H1 (cell line): ENCODE measurements at regions of chr10 and their contacts with region 1.

Region 1: DNA sequence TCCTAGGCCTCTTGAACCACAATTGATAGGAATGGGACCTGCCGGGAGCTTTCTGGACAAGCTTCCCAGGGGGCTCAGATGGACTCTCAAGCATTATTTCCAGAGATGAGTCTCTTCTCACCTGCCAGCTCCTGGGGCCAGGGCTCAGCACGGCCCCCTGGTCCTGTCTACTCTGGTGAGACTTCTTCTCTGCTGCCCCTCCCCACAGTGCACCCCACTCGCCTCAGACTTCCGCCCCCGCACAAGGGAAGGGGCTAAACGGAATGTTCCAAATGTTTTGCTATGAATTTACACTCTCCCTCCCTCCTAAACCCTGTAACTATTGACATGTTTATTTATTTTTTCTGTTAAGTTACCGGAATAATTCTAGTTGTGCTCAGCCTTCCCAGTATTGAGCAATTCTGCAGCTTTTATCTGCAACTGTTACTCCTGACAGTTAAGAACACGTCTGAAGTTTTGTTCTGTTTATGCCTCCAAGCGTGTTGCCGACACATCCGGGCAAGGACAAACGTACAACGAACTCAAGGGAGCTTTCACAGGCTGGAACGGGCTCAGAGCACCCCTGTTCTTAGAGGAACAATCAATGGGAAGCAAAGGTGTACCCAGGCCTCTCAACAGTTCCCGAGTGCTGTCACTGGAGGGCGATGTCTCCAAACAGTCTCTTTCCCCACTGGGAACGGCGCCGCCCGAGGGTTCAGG is 55.2 kb downstream of the FHIP2A start:
- DNase-seq: peak; percentile 71 to 87
- H3K4me3 ChIP-seq: no peak overlapping the region
- H3K27ac ChIP-seq: no peak overlapping the region
- H3K4me1 ChIP-seq: peaks cover 4 to 14% (median 6%) of the 10 kb centered on the region in 4 experiments
- H3K27me3 ChIP-seq: no peaks in the 10 kb centered on the region
- CTCF ChIP-seq: peak; percentile 88 to 97 (median 95)
- EP300 ChIP-seq: 0 out of 3 replicates have a peak, but pooled peaks of 1 of the 2 experiments have one; percentile 9
- POLR2A ChIP-seq: no peak
- RAD21 ChIP-seq: peak; percentile 98

Region 2: GRCh38 chr10:114894911-114895310 is 18.2 kb after region 1 on chr10:
- CTCF ChIA-PET with region 1: interaction called, 26 read pairs
- POLR2A ChIA-PET with region 1: interaction called, 3 read pairs
- DNase-seq: no peak
- H3K4me3 ChIP-seq: no peak overlapping the region
- H3K27ac ChIP-seq: no peak overlapping the region
- H3K4me1 ChIP-seq: peaks cover 0 to 4% (median 0%) of the 10 kb centered on the region in 4 experiments; a peak in 1 of 7 replicates
- H3K27me3 ChIP-seq: no peaks in the 10 kb centered on the region
- CTCF ChIP-seq: no peak
- EP300 ChIP-seq: no peak
- POLR2A ChIP-seq: no peak
- RAD21 ChIP-seq: no peak

Region 3: DNA sequence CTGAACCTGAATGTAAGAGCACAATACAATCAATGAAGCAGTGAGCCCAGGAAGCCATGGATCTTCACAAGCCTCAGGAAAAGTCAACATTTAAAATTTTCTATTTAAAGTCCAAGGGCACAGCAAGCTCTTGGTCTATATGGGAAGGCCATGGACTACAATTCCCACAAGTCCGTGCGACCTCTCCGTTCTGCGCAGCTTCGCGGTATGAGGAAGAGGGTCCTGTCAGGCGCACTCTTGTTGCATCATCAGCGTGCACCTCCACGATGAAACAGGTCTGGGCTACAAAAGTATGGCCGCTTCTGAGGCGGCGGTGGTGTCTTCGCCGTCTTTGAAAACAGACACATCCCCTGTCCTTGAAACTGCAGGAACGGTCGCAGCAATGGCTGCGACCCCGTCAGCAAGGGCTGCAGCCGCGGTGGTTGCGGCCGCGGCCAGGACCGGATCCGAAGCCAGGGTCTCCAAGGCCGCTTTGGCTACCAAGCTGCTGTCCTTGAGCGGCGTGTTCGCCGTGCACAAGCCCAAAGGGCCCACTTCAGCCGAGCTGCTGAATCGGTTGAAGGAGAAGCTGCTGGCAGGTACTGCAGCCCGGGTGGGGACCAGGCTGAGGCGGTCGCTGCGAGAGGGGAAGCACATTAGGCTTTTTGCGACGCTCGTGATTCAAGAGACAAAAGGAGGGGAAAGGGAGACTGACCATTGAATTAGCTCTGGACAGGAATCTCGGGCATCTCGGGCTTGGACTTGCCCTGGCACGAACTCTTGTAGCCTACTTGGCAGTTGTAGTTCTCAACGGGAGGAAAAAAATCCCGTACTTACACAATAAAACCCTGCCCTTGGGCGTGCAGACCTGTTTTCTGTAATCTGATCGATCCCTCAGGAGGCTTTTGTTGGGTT is 61.5 kb after region 1 on chr10 and contains the start of gene TRUB1:
- CTCF ChIA-PET with region 1: interaction called, 56 read pairs
- POLR2A ChIA-PET with region 1: interaction called, 3 read pairs
- DNase-seq: peak; percentile 84 to 86
- H3K4me3 ChIP-seq: peak within 1 kb of the TSS; percentile 80 to 100 (median 94)
- H3K27ac ChIP-seq: peak within 1 kb of the TSS; percentile 96
- H3K4me1 ChIP-seq: no peaks in the 10 kb centered on the region; a peak in 3 of 7 replicates
- H3K27me3 ChIP-seq: no peaks in the 10 kb centered on the region
- CTCF ChIP-seq: no peak
- EP300 ChIP-seq: no peak
- POLR2A ChIP-seq: peak; percentile 85 to 88
- RAD21 ChIP-seq: no peak
- total RNA-seq, gene TRUB1: 21.2 and 22.2 TPM in 2 replicates

Region 4: GRCh38 chr10:114996542-114996941 is 119.8 kb after region 1 on chr10:
- CTCF ChIA-PET with region 1: interaction called, 12 read pairs
- POLR2A ChIA-PET with region 1: interaction called, 3 read pairs
- DNase-seq: no peak
- H3K4me3 ChIP-seq: no peak overlapping the region
- H3K27ac ChIP-seq: no peak overlapping the region
- H3K4me1 ChIP-seq: peaks cover 0 to 6% (median 2%) of the 10 kb centered on the region in 4 experiments; a peak in 4 of 7 replicates
- H3K27me3 ChIP-seq: no peaks in the 10 kb centered on the region
- CTCF ChIP-seq: no peak
- EP300 ChIP-seq: no peak
- POLR2A ChIP-seq: no peak
- RAD21 ChIP-seq: no peak

Region 5: GRCh38 chr10:115059301-115059898 is 182.6 kb after region 1 on chr10:
- CTCF ChIA-PET with region 1: interaction called, 91 read pairs
- POLR2A ChIA-PET with region 1: no interaction called
- DNase-seq: no peak
- H3K4me3 ChIP-seq: no peak overlapping the region
- H3K27ac ChIP-seq: no peak overlapping the region
- H3K4me1 ChIP-seq: peaks cover 0 to 8% (median 1%) of the 10 kb centered on the region in 4 experiments; a peak in 2 of 7 replicates
- H3K27me3 ChIP-seq: 0 out of 7 replicates have a peak, but pooled peaks cover 0 to 2% (median 0%) of the 10 kb centered on the region in 4 experiments
- CTCF ChIP-seq: no peak
- EP300 ChIP-seq: no peak
- POLR2A ChIP-seq: no peak
- RAD21 ChIP-seq: no peak